ENCODE measurements at regions of chr13 and their contacts with region 1.

Region 1: GRCh38 chr13:33723772-33724435 is 94.0 kb upstream of the RFC3 start:
- DNase-seq: no peak
- H3K4me3 ChIP-seq: no peak overlapping the region
- H3K27ac ChIP-seq: peak overlapping the region; percentile 72
- H3K4me1 ChIP-seq: peaks cover 19% of the 10 kb centered on the region
- H3K27me3 ChIP-seq: no peaks in the 10 kb centered on the region
- CTCF ChIP-seq: peak; percentile 41 to 80 (median 53)
- POLR2A ChIP-seq: no peak

Region 2: GRCh38 chr13:32586080-32586900 is 1137.6 kb before region 1 on chr13 and contains the start of gene PDS5B:
- intact Hi-C with region 1: loop called (anchors 5 kb)
- DNase-seq: peak in 1 of 2 donors; percentile 93
- H3K4me3 ChIP-seq: peak within 1 kb of the TSS; percentile 88 to 91
- H3K27ac ChIP-seq: peak within 1 kb of the TSS; percentile 99
- H3K4me1 ChIP-seq: peaks cover 32% of the 10 kb centered on the region
- H3K27me3 ChIP-seq: no peaks in the 10 kb centered on the region
- CTCF ChIP-seq: peak; percentile 60 to 95 (median 91)
- POLR2A ChIP-seq: peak in 1 of 2 donors; percentile 48
- total RNA-seq, gene PDS5B: 49.4 TPM

Region 3: DNA sequence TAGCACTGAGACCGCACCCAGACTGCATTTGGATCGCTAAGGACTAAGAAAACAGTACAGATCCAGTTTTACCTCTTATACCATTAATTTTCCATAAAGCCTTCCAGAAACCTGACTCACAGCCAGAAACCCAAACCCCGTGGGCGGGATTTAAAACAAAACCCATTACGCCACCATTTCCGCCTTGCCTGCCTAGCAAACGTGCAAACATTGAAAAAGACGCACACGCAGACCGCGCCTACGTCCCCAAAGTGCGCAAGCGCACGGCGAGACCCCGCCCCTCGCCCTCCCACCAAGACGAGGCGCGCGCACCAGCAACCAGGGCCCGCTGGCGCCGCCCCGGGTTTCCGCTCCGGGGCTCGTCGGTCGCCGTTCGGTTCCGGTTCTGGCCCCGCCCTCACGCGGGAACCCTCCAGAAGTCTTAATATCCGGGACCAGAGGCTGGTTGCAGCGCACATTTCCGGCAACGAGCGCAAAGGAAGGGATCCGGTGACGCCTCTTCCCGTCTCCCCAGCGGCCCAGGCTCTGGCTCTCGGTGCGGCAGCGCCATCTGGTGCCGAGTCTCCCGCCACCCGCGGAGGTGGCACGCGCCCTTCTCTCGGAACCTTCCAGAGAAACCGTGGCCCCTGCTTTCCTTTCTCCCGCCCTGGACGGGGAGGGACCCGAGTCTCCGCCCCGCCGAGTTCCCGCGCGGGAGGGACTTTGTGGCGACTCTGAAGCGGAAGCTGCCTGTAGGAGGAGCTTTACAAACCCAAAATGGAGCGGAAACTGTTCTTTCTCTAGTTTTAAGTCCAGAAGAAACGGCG is 181.4 kb before region 1 on chr13:
- intact Hi-C with region 1: loop called (anchors 5 kb)
- DNase-seq: peak; percentile 98 to 100
- H3K4me3 ChIP-seq: peak overlapping the region; percentile 49 to 51
- H3K27ac ChIP-seq: peak overlapping the region; percentile 98
- H3K4me1 ChIP-seq: peaks cover 30% of the 10 kb centered on the region
- H3K27me3 ChIP-seq: no peaks in the 10 kb centered on the region
- CTCF ChIP-seq: peak; percentile 60 to 92 (median 84)
- POLR2A ChIP-seq: peak in 1 of 2 donors; percentile 69

Region 4: GRCh38 chr13:33642374-33643068 is 81.4 kb before region 1 on chr13:
- intact Hi-C with region 1: loop called (anchors 10 kb)
- DNase-seq: peak in 1 of 2 donors; percentile 95
- H3K4me3 ChIP-seq: no peak overlapping the region
- H3K27ac ChIP-seq: peak overlapping the region; percentile 63
- H3K4me1 ChIP-seq: peaks cover 55% of the 10 kb centered on the region
- H3K27me3 ChIP-seq: no peaks in the 10 kb centered on the region
- CTCF ChIP-seq: no peak
- POLR2A ChIP-seq: no peak